Panc1 (cell line): ENCODE measurements at regions of chr6 and their contacts with region 1.

Region 1: GRCh38 chr6:27188885-27189418 is 58.5 kb upstream of the PRSS16 start:
- DNase-seq: no peak
- ATAC-seq: peak; percentile 93
- H3K4me3 ChIP-seq: peak overlapping the region; percentile 81 to 91
- H3K27ac ChIP-seq: peak overlapping the region; percentile 87
- H3K4me1 ChIP-seq: peaks cover 3% of the 10 kb centered on the region; the same call in 1 of the 2 replicates
- H3K27me3 ChIP-seq: no peaks in the 10 kb centered on the region
- CTCF ChIP-seq: peak; percentile 90

Region 2: GRCh38 chr6:26659042-26659999 is 529.6 kb before region 1 on chr6 and contains the start of gene ZNF322:
- CTCF ChIA-PET with region 1: no interaction called
- POLR2A ChIA-PET with region 1: no interaction called
- in situ Hi-C with region 1: no loop called
- intact Hi-C with region 1: no loop called
- DNase-seq: peak; percentile 71
- ATAC-seq: peak; percentile 100
- H3K4me3 ChIP-seq: peak within 1 kb of the TSS; percentile 64 to 91
- H3K27ac ChIP-seq: peak within 1 kb of the TSS; percentile 90
- H3K4me1 ChIP-seq: peaks cover 6% of the 10 kb centered on the region; the same call in 1 of the 2 replicates
- H3K27me3 ChIP-seq: peaks cover 2% of the 10 kb centered on the region; the same call in 1 of the 2 replicates
- CTCF ChIP-seq: no peak
- total RNA-seq, gene ZNF322: 31.2 TPM

Region 3: DNA sequence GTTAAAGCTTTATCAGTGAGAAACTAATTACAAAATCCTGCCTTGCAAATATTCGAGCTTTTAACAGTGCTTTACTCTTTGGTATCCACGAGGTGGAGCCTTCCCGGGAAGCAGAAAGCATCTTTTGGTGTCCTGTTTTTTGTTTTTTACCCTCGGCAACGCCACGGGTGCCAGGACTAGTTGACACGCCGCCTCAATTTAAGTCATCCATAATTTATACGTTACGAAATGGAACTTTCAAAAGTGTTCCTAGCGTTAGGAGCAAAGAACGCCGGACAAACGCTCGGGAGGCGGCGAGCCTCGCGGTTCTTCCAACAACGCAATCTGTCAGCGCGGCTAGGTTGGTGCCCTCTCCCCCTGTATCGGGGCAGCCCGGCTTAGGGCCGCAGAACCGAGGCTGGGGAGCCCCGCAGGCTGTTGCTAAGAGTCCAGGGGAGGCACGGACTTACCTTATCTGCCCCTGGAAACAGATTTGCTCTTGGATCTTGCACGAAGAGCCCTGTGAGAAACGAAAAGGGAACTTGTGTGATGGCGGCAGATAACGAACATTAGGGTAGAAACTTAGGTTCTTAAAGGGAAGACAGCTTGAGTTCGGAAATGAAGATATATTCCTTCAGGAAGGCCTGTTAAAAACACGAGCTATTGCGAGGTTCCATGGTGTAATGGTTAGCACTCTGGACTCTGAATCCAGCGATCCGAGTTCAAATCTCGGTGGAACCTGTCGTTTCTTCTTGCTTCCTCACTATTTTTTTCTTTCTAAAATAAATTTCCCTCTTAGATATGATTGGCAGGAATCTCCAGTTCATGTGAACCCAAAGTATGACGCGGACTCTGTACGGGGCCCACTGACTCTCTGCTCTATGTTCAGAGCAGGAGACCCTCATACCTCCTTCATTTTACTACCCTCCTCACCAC is 330.2 kb after region 1 on chr6:
- CTCF ChIA-PET with region 1: no interaction called
- POLR2A ChIA-PET with region 1: interaction called, 5 read pairs
- in situ Hi-C with region 1: no loop called
- intact Hi-C with region 1: loop called (anchors 2 kb)
- DNase-seq: peak; percentile 96
- ATAC-seq: peak; percentile 93
- H3K4me3 ChIP-seq: peak overlapping the region; percentile 93 to 95
- H3K27ac ChIP-seq: peak overlapping the region; percentile 82
- H3K4me1 ChIP-seq: peaks cover 10% of the 10 kb centered on the region
- H3K27me3 ChIP-seq: peaks cover 11% of the 10 kb centered on the region; the same call in 1 of the 2 replicates
- CTCF ChIP-seq: peak; percentile 85